Calu3 (cell line): ENCODE measurements at regions of chr3 and their contacts with region 1.

Region 1: DNA sequence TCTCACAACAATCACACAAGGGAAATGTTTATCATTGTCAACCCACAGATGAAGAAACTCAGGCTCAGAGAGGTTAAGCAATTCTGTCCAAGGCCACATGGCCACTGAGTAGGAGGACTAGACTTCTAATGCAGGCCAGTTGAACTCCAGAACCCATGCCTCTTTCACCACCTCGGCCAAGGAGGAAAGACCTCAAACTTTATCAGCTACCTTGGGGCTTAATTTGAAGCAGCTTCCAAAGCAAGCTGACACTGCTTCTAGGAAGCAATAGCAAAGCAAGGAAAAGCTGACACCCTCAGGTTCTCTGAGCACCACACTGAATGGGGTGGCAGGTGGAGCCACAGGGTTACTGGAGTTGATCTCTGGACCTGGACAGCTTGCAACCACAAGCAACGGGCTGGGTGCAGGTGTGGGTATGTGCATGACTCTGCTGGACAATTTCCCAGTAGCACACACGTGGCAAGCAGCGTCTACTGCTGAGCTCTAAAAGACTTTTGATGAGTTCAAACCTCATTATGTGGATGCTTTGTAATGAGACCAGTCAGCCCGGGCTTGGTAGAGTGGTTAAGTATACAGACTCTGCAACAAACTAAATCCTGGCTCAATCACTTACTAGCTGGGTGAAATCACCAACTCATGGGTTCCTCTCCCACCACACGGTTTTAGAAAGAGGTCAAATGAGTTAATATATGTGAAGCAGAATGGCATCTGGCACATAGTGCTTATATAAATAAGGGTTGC is 23.1 kb downstream of the CCNL1 start:
- DNase-seq: peak; percentile 48
- H3K4me3 Mint-ChIP-seq: peak overlapping the region; percentile 49
- H3K27ac Mint-ChIP-seq: peak overlapping the region; percentile 56
- H3K4me1 Mint-ChIP-seq: peaks cover 52% of the 10 kb centered on the region
- H3K27me3 Mint-ChIP-seq: no peaks in the 10 kb centered on the region
- CTCF ChIP-seq: no peak

Region 2: GRCh38 chr3:155995525-155996351 is 1141.1 kb before region 1 on chr3:
- CTCF ChIA-PET with region 1: no interaction called
- intact Hi-C with region 1: loop called (anchors 2 kb)
- DNase-seq: no peak
- H3K4me3 Mint-ChIP-seq: no peak overlapping the region
- H3K27ac Mint-ChIP-seq: no peak overlapping the region
- H3K4me1 Mint-ChIP-seq: peaks cover 7% of the 10 kb centered on the region
- H3K27me3 Mint-ChIP-seq: peaks cover 12% of the 10 kb centered on the region
- CTCF ChIP-seq: peak; percentile 36

Region 3: DNA sequence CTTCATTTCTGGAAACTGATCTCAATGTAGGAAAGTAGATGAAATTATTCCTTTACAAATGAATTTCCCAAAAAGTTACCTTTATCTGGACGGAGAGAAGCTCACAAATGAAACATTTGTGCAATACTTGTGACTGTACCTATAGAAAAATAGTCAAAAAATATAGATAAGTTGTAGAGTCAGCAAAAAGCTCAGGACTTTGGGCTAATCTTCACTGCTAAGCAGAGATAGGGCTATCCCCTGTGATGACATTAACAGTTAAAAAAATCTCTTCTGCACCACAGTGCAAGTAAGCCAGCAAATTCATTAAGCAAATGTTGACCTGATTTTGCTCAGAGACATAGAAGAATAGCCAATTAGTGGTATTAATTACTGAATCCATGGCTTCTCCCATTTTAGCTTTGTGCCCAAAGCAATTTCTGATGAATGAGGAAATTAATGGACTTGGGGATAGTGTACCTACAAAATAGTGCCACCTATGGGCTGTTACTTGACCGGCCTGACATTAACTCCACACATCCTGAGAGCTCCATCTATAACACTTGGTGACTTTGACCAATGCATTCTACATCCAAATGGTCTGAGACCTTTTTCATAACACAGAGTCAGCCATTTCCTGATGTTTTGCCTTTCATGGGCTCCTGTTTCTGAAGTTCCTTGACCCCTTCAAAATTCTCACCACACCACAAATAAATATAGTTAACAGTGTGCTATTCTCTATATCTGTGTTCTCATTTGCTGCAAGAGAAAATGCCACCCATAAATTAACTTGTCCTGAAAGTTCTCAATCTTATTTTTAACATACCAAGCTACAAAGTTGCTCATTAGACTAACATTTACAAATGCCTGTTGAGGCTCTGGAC is 686.9 kb before region 1 on chr3:
- CTCF ChIA-PET with region 1: no interaction called
- intact Hi-C with region 1: loop called (anchors 2 kb)
- DNase-seq: peak; percentile 39
- H3K4me3 Mint-ChIP-seq: no peak overlapping the region
- H3K27ac Mint-ChIP-seq: no peak overlapping the region
- H3K4me1 Mint-ChIP-seq: no peaks in the 10 kb centered on the region
- H3K27me3 Mint-ChIP-seq: no peaks in the 10 kb centered on the region
- CTCF ChIP-seq: peak; percentile 61

Region 4: DNA sequence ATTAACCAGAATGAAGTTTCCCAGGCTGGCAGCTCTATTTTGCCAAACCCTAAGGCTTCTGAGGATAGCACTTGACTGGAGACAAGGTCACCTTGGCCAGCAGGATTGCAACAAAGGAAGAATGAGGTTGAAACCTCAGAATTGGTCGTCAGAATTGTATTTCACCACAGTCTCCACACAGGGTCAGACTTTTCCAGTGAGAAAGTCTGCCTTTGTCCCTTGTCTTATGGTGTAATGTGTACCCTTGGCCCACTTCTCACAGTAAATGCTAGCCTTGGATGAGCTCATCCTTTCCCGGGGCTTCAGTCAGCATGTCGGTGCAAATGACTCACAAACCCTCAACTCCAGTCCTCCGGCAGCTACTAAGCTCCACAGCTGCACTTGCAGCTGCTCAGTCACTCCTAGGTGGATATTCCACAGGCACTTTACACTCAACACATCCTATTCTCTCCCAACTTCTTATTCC is 601.6 kb before region 1 on chr3:
- CTCF ChIA-PET with region 1: interaction called, 28 read pairs
- intact Hi-C with region 1: loop called (anchors 2 kb)
- DNase-seq: peak; percentile 76
- H3K4me3 Mint-ChIP-seq: peak overlapping the region; percentile 3
- H3K27ac Mint-ChIP-seq: peak overlapping the region; percentile 35
- H3K4me1 Mint-ChIP-seq: peaks cover 22% of the 10 kb centered on the region
- H3K27me3 Mint-ChIP-seq: no peaks in the 10 kb centered on the region
- CTCF ChIP-seq: no peak

Region 5: GRCh38 chr3:156554842-156555687 is 581.8 kb before region 1 on chr3 and contains the start of gene SSR3:
- CTCF ChIA-PET with region 1: interaction called, 3 read pairs
- intact Hi-C with region 1: loop called (anchors 5 kb)
- DNase-seq: peak; percentile 100
- H3K4me3 Mint-ChIP-seq: peak within 1 kb of the TSS; percentile 87
- H3K27ac Mint-ChIP-seq: peak within 1 kb of the TSS; percentile 90
- H3K4me1 Mint-ChIP-seq: peaks cover 43% of the 10 kb centered on the region
- H3K27me3 Mint-ChIP-seq: no peaks in the 10 kb centered on the region
- CTCF ChIP-seq: peak; percentile 68
- total RNA-seq, gene SSR3: 287 and 312 TPM in 2 replicates

Region 6: DNA sequence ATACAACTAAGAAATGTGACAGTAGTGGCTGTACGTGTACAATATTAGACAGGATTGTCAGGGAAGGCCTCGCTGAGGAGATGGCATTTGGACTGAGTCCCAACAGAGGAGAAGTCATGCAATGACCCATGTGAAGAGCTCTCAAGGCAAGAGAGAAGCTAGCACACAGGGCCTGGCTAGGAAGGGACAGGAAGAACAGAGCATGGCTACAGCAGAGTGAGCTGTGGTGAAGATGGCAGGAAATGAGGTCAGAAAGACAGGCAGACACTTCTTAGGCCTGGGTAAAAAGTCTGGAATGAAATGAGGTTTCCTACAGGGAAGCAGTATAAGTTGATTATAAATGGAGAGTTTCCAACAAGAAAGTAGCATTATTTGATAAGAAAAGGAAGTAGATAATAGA is 343.9 kb before region 1 on chr3:
- CTCF ChIA-PET with region 1: no interaction called
- intact Hi-C with region 1: no loop called
- DNase-seq: no peak
- H3K4me3 Mint-ChIP-seq: no peak overlapping the region
- H3K27ac Mint-ChIP-seq: peak overlapping the region; percentile 1
- H3K4me1 Mint-ChIP-seq: peaks cover 39% of the 10 kb centered on the region
- H3K27me3 Mint-ChIP-seq: no peaks in the 10 kb centered on the region
- CTCF ChIP-seq: no peak

Region 7: DNA sequence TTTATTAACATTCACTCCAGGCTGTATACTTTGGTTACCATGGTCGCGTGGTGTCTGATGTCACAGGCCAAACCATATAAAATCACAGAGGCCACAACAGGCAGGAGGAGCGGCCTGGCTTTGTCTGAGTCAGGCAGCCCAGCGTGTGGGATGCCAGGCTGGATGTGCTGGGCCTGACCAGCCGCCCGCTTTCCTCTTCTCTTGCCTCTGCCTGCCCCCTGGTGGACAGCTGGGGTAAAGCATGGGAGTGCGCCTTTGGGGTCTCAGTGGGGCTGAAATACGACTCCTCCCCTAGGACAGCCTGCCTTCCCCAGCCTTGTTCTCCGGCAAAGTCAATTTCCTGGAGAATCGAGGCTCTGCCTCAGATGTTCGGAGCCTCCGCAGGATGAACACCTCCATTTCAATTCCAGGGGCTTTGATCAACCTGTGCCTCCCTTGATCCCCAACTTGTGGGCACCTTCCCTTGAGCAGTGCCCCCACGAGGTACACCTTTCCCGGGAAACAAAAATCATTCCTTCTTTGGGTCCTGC is 55.1 kb before region 1 on chr3:
- CTCF ChIA-PET with region 1: interaction called, 14 read pairs
- intact Hi-C with region 1: no loop called
- DNase-seq: peak; percentile 99
- H3K4me3 Mint-ChIP-seq: no peak overlapping the region
- H3K27ac Mint-ChIP-seq: peak overlapping the region; percentile 94
- H3K4me1 Mint-ChIP-seq: peaks cover 46% of the 10 kb centered on the region
- H3K27me3 Mint-ChIP-seq: no peaks in the 10 kb centered on the region
- CTCF ChIP-seq: peak; percentile 100

Region 8: GRCh38 chr3:157166561-157166960 is 29.7 kb after region 1 on chr3:
- CTCF ChIA-PET with region 1: no interaction called
- intact Hi-C with region 1: no loop called
- DNase-seq: no peak
- H3K4me3 Mint-ChIP-seq: no peak overlapping the region
- H3K27ac Mint-ChIP-seq: peak overlapping the region; percentile 5
- H3K4me1 Mint-ChIP-seq: peaks cover 39% of the 10 kb centered on the region
- H3K27me3 Mint-ChIP-seq: no peaks in the 10 kb centered on the region
- CTCF ChIP-seq: no peak